ENCODE measurements at regions of chr11 and their contacts with region 1.

Region 1: GRCh38 chr11:2885676-2886081 is at the start of gene CDKN1C:
- DNase-seq: peak; percentile 83
- ATAC-seq: peak; percentile 92
- H3K4me3 Mint-ChIP-seq: peak within 1 kb of the TSS; percentile 75
- H3K27ac Mint-ChIP-seq: no peak within 1 kb of the TSS
- H3K4me1 Mint-ChIP-seq: peaks cover 9% of the 10 kb centered on the region
- H3K27me3 Mint-ChIP-seq: peaks cover 35% of the 10 kb centered on the region
- total RNA-seq, gene CDKN1C: 0.44 to 0.87 TPM

Region 2: DNA sequence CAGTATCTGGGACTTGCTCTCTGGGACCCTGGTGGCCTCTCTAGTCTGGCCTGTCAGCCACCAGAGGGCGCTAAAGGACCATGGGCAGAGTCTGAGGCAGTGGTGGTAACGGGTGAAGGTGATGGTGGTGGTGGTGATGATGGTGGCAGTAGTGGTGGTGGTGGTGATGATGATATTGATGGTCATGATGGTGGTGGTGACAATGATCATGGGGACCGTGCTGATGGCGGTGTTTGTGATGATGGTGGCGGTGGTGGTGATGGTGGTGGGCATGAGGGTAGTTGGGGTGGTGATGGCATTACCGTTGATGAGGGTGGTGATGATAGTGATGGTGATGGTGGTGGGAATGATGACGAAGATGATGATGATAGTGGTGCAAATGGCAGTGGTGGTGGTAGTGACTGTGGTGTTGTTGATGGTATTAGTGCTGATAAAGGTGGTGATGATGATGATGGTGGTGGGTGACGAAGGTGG is 457.3 kb before region 1 on chr11:
- CTCF ChIA-PET with region 1: interaction called, 10 read pairs
- DNase-seq: peak; percentile 85
- ATAC-seq: peak; percentile 79
- H3K4me3 Mint-ChIP-seq: no peak overlapping the region
- H3K27ac Mint-ChIP-seq: no peak overlapping the region
- H3K4me1 Mint-ChIP-seq: no peaks in the 10 kb centered on the region
- H3K27me3 Mint-ChIP-seq: no peaks in the 10 kb centered on the region

Region 3: GRCh38 chr11:2901854-2902783 is 16.4 kb after region 1 on chr11:
- CTCF ChIA-PET with region 1: interaction called, 85 read pairs
- DNase-seq: peak; percentile 99
- ATAC-seq: peak; percentile 96
- H3K4me3 Mint-ChIP-seq: peak overlapping the region; percentile 68
- H3K27ac Mint-ChIP-seq: peak overlapping the region; percentile 72
- H3K4me1 Mint-ChIP-seq: peaks cover 36% of the 10 kb centered on the region
- H3K27me3 Mint-ChIP-seq: peaks cover 3% of the 10 kb centered on the region

Region 4: DNA sequence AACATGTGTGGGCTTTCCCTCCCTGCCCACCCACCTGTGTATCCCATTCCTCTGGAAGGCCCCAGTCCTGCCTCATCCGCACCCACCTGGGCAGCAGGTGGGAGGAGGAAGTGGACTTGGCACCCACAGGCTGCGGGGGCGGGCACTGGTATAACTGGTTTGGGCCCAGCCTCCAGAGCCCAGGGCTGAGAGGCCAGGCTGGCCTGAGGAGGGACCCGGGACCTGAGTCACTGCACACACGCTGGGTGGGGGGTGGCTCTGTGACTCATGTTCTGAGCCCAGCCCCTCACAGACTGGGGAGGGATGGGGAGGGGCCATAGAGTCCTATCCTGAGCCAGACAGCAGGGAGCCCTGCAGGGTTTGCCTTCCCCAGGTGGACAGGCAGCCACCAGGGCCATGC is 26.8 kb after region 1 on chr11:
- CTCF ChIA-PET with region 1: no interaction called
- DNase-seq: no peak
- ATAC-seq: no peak
- H3K4me3 Mint-ChIP-seq: no peak overlapping the region
- H3K27ac Mint-ChIP-seq: no peak overlapping the region
- H3K4me1 Mint-ChIP-seq: peaks cover 13% of the 10 kb centered on the region
- H3K27me3 Mint-ChIP-seq: no peaks in the 10 kb centered on the region

Measured in activated CD8-positive, alpha-beta memory T cell treated with anti-CD3 and anti-CD28 coated beads, Interleukin-2, amount 10 ng/mL, durations not matched to agents 7 days and 5 days (primary cell).